IMR-90 (cell line): ENCODE measurements at regions of chr12 and their contacts with region 1.

Region 1: DNA sequence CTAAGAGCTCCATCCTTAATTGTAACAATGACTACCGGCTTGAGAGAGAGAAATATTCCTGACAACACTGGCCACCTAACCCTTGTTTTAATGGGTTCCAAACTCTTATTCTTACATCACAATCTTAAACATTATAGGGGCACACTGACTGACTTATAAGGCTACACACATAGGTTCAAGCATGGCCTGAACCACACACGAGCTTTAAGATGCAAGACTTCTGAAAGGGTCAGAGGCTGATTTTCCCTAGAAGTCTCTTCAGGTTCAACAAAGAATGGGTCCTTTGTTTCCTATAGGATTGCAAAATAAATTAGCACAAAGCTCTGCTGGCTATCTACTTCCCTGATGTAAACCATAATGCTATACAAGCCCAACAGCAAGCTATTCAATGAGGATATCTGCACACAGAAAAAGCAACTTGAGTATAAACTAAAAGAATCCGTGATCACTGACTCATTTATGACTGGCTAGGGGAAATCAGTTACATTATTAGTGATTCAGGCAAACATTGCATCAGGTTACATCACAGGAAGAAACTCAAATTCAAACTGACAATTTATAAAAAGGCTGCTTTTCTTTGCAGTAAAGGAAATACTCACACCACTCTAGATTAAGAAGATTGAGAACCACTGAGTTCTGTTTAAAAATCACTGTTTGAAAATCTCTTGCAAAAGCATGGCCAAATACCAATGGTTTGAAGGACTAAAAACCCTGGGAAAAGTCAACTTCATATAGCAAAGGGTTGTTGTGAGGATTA is 8.5 kb downstream of the BTG1 start:
- DNase-seq: peak; percentile 97
- ATAC-seq: peak; percentile 77
- H3K4me3 ChIP-seq: no peak overlapping the region
- H3K27ac ChIP-seq: peak overlapping the region; percentile 97
- H3K4me1 ChIP-seq: peaks cover 19% of the 10 kb centered on the region
- H3K27me3 ChIP-seq: no peaks in the 10 kb centered on the region
- CTCF ChIP-seq: no peak
- POLR2A ChIP-seq: peak; percentile 56
- RAD21 ChIP-seq: peak; percentile 11; the same call in 1 of the 2 replicates

Region 2: DNA sequence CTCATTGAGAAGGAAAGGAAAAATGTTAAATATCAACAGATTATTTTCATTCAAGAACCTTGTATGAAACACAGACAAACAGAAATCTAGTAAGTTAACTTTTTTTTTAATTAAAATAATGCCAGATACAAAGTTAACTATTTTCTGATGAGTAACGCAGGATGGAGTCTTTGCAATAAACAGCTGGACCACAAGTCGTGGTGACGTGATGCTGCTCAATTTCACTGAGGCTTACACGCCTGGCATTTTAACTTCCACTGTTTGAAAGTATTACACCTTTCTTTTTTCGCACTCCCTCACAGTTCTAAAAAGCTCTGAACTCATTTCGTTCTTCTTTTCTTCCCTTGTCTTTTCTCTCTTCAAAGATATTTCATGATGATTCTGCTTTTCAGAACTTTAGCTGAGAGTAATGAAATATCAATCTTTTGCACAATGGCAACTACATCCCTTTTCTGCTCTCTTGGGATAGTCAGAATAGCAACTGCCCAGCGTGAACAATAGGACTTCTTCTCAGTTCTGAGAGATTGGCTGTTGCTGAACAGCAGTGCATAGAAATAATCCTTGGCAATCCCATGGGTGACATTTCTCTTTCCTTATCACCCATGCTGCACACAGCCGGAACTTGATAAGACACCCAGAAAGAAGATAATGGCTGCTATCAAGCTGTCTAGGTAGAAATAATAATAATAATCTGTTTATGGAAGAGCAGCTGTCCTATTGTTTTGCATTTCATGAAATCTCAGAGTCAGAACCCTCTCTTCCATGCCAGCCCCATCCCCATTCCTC is 151.9 kb before region 1 on chr12:
- CTCF ChIA-PET with region 1: no interaction called
- POLR2A ChIA-PET with region 1: no interaction called
- dilution Hi-C with region 1: no loop called
- in situ Hi-C with region 1: no loop called
- intact Hi-C with region 1: loop called (anchors 2 kb)
- DNase-seq: peak; percentile 83
- ATAC-seq: peak; percentile 69
- H3K4me3 ChIP-seq: no peak overlapping the region
- H3K27ac ChIP-seq: peak overlapping the region; percentile 46
- H3K4me1 ChIP-seq: peaks cover 27% of the 10 kb centered on the region
- H3K27me3 ChIP-seq: no peaks in the 10 kb centered on the region
- CTCF ChIP-seq: no peak
- POLR2A ChIP-seq: no peak
- RAD21 ChIP-seq: no peak

Region 3: GRCh38 chr12:92078167-92079053 is 58.7 kb before region 1 on chr12:
- CTCF ChIA-PET with region 1: interaction called, 3 read pairs
- POLR2A ChIA-PET with region 1: no interaction called
- dilution Hi-C with region 1: no loop called
- in situ Hi-C with region 1: loop called (anchors 5 kb)
- intact Hi-C with region 1: loop called (anchors 2 kb)
- DNase-seq: peak; percentile 96
- ATAC-seq: peak; percentile 45
- H3K4me3 ChIP-seq: no peak overlapping the region
- H3K27ac ChIP-seq: peak overlapping the region; percentile 91; the same call in 1 of the 2 replicates
- H3K4me1 ChIP-seq: peaks cover 26% of the 10 kb centered on the region
- H3K27me3 ChIP-seq: no peaks in the 10 kb centered on the region
- CTCF ChIP-seq: no peak
- POLR2A ChIP-seq: no peak
- RAD21 ChIP-seq: no peak